ENCODE measurements at regions of chr1 and their contacts with region 1.

Region 1: DNA sequence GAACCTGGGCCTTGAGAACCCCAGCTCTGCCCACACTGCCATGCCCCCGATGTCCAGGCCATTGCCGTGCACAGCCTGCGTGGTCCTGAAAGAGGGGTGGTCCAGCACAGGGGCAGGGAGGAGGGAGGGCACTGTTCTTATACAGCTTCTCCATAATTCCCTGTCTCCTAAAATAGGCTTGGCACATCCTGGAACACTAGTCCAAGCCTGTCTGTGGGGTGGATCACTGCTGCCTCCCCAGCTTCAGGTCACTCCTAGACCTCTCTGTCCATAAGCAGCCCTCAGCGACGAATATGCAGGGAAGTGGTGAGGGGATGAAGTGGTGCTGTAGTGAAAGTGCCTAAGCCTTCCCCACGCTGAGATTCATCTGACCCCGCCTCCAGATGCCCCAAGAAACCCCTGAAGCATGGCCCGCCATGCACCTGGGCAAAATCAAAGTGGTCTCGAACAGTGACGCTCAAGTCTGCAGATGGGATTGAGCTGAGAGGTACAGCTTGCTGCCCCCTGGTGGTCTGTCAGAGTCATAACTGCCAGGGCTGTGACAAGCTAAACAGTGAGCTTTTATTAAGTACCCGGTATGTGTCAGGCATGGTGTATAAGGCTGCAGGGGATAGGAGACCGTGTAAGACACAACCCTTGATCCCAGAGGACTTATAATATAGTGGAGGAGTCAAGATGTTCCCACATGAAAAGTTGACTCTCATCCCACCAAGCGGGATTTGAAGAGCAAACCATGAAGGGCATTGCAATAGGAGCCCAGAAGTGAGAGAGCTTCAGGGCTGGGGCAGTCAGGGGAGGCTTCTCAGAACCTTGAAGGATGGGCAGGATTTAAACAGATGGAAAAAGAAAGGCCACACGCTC is 66.6 kb downstream of the FAM163A start:
- DNase-seq: peak; percentile 69 to 76
- ATAC-seq: peak; percentile 70 to 80
- H3K4me3 ChIP-seq: no peak overlapping the region
- H3K27ac ChIP-seq: no peak overlapping the region
- H3K4me1 ChIP-seq: no peaks in the 10 kb centered on the region
- CTCF ChIP-seq: peak; percentile 83
- EP300 ChIP-seq: no peak
- POLR2A ChIP-seq: no peak
- RAD21 ChIP-seq: peak; percentile 64 to 66

Region 2: DNA sequence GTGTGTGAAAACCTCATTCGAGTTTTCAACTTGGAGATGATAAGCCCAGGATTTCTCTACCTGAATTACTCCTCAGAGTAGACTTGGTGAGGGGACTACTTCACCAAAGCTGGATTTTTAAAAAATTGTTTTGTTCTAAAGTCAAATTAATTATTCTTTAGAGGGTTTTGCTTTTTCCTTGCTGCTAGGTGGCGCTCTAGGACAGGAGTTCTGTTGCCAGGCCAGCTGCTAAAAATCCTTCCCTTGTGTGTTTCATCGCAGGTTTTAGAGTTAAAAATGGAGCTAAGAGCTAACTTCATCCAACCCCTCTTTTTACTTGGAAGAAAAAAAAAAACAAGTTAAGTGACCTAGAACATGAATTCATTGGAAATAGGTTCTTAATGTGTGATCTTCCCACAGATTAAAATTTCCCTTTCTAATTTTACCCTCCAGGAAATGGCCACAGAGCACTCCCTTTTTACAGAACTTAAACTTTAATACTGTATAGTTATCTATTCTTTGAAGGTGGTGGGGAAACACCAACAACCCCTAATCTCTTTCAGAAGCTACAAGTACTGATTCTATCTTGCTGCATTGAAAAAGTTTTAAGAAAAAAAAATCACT is 103.3 kb before region 1 on chr1:
- CTCF ChIA-PET with region 1: interaction called, 644 read pairs
- POLR2A ChIA-PET with region 1: interaction called, 7 read pairs
- DNase-seq: peak; percentile 30 to 68
- ATAC-seq: peak; percentile 33 to 68; a peak in 3 of 6 replicates
- H3K4me3 ChIP-seq: no peak overlapping the region
- H3K27ac ChIP-seq: no peak overlapping the region
- H3K4me1 ChIP-seq: no peaks in the 10 kb centered on the region
- CTCF ChIP-seq: peak; percentile 97
- EP300 ChIP-seq: no peak
- POLR2A ChIP-seq: no peak
- RAD21 ChIP-seq: peak; percentile 94 to 95

Region 3: DNA sequence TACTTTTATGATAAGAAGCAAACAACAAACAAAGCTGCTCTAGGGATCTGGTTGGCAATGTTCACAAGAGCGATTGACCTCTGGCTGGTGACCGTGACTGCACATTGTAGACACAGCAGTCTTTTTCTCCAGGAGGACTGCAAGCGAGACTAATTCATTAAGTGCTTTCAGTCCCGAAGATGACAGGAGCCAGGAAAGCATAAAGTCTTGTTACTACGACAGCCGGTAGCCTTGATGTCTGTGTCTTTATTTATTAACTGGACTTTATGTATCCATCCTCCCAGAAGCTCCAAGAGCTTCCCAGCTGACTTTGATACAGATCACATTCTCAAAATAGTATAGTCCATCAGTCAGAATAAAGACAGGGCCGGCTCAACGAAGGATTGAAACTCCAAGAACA is 48.4 kb before region 1 on chr1:
- CTCF ChIA-PET with region 1: interaction called, 12 read pairs
- POLR2A ChIA-PET with region 1: no interaction called
- DNase-seq: no peak
- ATAC-seq: no peak
- H3K4me3 ChIP-seq: no peak overlapping the region
- H3K27ac ChIP-seq: no peak overlapping the region
- H3K4me1 ChIP-seq: no peaks in the 10 kb centered on the region
- CTCF ChIP-seq: no peak
- EP300 ChIP-seq: no peak
- POLR2A ChIP-seq: no peak
- RAD21 ChIP-seq: no peak

Region 4: GRCh38 chr1:179794669-179795068 is 15.1 kb before region 1 on chr1:
- CTCF ChIA-PET with region 1: interaction called, 46 read pairs
- POLR2A ChIA-PET with region 1: no interaction called
- DNase-seq: no peak
- ATAC-seq: no peak
- H3K4me3 ChIP-seq: no peak overlapping the region
- H3K27ac ChIP-seq: no peak overlapping the region
- H3K4me1 ChIP-seq: no peaks in the 10 kb centered on the region
- CTCF ChIP-seq: no peak
- EP300 ChIP-seq: no peak
- POLR2A ChIP-seq: no peak
- RAD21 ChIP-seq: no peak

Region 5: GRCh38 chr1:179831852-179832699 is 22.3 kb after region 1 on chr1:
- CTCF ChIA-PET with region 1: interaction called, 39 read pairs
- POLR2A ChIA-PET with region 1: no interaction called
- DNase-seq: no peak
- ATAC-seq: peak in 1 of 2 experiments; percentile 36; a peak in 2 of 6 replicates
- H3K4me3 ChIP-seq: no peak overlapping the region
- H3K27ac ChIP-seq: no peak overlapping the region
- H3K4me1 ChIP-seq: no peaks in the 10 kb centered on the region
- CTCF ChIP-seq: no peak
- EP300 ChIP-seq: no peak
- POLR2A ChIP-seq: no peak
- RAD21 ChIP-seq: no peak

Region 6: DNA sequence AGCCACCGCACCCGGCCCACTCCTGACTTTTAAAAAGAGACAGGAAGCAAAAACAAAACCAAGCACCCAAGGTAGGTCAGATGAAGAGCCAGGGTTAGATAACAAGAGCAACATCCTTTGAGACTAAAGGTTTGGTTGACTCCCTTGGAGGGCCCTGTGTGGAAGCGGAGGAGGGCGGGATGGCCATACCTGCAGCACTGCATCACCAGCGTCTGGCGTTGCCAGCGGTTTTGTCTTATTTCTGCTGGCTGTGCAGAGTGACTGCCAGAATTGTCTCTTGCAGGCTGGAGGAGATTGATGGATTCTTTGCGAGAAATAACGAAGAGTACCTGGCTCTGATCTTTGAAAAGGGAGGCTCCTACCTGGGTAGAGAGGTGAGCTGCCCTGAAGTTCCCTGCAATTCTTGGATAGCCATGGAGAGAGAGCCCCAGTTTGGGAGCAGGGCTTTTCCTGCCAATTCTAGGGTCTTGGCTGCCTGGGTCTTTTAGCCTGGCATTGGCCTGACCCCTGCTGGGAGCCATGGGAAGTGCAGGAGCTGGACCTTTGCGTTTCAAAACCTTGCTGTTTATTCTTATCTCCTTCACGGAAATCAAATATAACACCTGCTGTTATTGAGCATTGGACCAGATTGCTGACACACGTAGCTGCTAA is 368.9 kb after region 1 on chr1:
- CTCF ChIA-PET with region 1: interaction called, 27 read pairs
- POLR2A ChIA-PET with region 1: no interaction called
- DNase-seq: peak; percentile 53 to 82
- ATAC-seq: peak; percentile 27 to 76; a peak in 4 of 6 replicates
- H3K4me3 ChIP-seq: no peak overlapping the region
- H3K27ac ChIP-seq: no peak overlapping the region
- H3K4me1 ChIP-seq: no peaks in the 10 kb centered on the region
- CTCF ChIP-seq: peak; percentile 94
- EP300 ChIP-seq: no peak
- POLR2A ChIP-seq: no peak
- RAD21 ChIP-seq: peak; percentile 93 to 95